ENCODE measurements at regions of chr20 and their contacts with region 1.

Region 1: DNA sequence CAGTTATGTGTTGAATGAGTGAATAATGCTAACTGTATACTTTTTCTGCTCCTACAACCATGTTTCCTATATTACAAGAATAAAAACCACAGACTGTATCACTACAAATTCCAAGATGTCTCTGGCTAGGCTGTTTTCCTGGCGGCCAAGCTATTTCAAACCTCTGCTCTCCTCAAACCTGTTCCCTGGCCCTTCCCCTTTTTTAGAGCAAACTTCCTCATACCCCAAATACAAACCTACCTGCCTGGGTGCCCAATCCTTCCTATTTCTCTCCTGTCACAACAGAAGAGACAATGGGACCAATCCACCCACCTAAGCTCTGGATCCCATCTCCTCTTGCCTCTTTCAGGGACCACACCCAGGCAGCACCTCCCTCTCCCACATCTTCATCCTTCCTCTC is 7.5 kb downstream of the TOMM34 start:
- DNase-seq: no peak
- CTCF ChIP-seq: no peak

Region 2: GRCh38 chr20:44837946-44838345 is 114.8 kb before region 1 on chr20:
- CTCF ChIA-PET with region 1: no interaction called
- POLR2A ChIA-PET with region 1: interaction called, 10 read pairs
- DNase-seq: no peak
- CTCF ChIP-seq: no peak

Region 3: DNA sequence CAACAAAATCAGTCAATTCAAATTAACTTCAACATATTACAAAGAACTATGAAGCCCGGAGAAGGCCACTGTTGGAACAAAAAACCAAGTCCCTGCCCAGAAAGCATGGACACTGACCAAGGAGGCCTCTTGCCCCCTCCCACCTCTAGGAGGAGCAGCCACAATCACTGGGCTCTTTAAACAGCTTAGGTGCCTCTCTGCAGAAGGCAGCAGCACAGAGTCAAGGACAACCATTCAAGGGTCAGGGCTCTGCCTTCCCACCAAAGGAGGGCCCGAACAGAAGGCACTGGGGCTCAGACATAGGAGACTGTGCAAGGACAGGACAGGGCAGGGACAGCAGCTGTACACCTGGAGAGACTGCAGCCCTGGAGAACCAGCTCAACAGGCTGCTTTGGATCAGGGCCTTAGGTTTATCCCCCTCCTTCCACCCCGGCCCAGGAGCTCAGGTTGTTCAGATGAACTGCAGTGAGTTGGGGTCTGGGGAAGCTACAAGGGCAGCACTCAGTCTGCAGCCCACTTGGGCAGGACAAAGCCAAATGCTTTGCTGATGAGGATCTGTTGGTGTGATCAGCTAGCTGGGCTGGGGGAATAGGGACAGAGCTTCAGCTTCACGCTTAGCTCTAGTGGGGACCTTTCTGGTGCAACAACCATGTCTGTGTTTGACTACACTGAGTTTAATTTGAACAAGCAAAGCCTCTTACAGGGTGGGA is 10.3 kb before region 1 on chr20:
- CTCF ChIA-PET with region 1: interaction called, 12 read pairs
- POLR2A ChIA-PET with region 1: no interaction called
- DNase-seq: no peak
- CTCF ChIP-seq: no peak

Region 4: GRCh38 chr20:45850926-45851325 is 898.2 kb after region 1 on chr20:
- CTCF ChIA-PET with region 1: no interaction called
- POLR2A ChIA-PET with region 1: no interaction called
- DNase-seq: no peak
- CTCF ChIP-seq: no peak

Measured in GM10248 (cell line).